ENCODE measurements at regions of chr1 and their contacts with region 1.

Region 1: DNA sequence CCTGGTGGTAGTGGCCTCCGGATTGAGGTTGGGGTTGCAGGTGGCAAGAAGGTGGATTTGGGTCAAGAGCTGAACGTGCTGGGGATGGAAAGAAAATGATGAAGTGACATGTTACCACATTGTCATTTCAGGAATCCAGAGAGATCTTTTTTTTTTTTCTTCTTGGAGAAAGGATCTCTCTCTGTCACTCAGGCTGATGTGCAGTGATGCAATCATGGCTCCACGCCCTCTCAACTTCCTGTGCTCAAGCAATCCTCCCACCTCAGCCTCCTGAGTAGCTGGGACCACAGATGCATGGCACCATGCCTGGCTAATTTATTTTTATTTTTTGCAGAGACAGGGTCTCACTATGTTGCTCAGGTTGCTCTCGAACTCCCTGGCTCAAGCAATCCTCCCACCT is 80.6 kb downstream of the GON4L start:
- DNase-seq: no peak

Region 2: GRCh38 chr1:155834296-155834926 is 58.0 kb after region 1 on chr1:
- CTCF ChIA-PET with region 1: interaction called, 11 read pairs
- POLR2A ChIA-PET with region 1: no interaction called
- DNase-seq: no peak

Measured in HEK293T (cell line).